ENCODE measurements at regions of chr3 and their contacts with region 1.

Region 1: GRCh38 chr3:37967260-37967881 is 23.2 kb upstream of the VILL start:
- DNase-seq: peak; percentile 76
- ATAC-seq: peak; percentile 87

Region 2: GRCh38 chr3:37856381-37856780 is 111.0 kb before region 1 on chr3:
- intact Hi-C with region 1: loop called (anchors 2 kb)
- DNase-seq: no peak
- ATAC-seq: peak; percentile 42

Region 3: DNA sequence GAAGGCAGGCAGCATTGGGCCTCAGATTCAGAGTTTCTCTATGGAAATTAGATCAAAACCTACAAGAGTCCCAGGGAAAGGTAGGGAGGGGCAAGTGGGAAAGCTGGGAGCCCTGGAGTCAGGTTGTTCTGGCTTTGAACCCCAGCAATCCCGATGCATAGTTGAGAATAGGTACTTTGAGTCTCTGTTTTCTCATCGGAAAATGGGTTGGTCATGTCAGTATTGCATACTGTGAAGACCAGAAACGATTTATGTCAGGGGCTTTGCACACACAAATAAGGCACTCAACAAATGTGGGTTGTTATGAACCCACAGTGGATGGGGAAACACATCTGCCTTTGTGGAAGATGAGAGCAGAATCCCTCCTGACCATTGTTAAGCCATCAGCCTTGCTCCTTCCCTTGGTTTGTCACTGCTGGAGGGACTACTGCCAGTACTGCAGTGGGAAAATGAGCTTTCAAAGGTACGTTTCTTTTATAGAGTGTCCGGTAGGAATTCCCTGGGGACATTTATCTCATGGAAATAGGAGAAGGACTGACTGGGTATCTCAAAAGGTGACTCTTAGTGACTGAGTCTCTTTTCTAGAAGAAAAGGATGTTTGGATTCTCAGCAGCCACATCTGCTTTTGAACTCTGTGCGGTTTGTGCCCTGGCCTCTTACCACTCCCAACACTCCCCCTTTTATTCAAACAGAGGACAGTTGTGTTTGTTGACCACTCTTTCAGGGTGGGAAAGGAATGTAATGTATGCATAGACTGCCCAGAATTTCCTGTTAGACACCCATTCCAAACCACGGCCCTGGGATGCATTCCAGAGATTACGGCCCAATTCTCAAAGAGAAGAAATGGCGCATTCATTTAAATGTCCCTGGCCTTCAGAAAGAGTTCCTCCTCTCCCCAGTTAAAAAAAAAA is 31.4 kb before region 1 on chr3:
- intact Hi-C with region 1: no loop called
- DNase-seq: no peak
- ATAC-seq: peak; percentile 24

Region 4: DNA sequence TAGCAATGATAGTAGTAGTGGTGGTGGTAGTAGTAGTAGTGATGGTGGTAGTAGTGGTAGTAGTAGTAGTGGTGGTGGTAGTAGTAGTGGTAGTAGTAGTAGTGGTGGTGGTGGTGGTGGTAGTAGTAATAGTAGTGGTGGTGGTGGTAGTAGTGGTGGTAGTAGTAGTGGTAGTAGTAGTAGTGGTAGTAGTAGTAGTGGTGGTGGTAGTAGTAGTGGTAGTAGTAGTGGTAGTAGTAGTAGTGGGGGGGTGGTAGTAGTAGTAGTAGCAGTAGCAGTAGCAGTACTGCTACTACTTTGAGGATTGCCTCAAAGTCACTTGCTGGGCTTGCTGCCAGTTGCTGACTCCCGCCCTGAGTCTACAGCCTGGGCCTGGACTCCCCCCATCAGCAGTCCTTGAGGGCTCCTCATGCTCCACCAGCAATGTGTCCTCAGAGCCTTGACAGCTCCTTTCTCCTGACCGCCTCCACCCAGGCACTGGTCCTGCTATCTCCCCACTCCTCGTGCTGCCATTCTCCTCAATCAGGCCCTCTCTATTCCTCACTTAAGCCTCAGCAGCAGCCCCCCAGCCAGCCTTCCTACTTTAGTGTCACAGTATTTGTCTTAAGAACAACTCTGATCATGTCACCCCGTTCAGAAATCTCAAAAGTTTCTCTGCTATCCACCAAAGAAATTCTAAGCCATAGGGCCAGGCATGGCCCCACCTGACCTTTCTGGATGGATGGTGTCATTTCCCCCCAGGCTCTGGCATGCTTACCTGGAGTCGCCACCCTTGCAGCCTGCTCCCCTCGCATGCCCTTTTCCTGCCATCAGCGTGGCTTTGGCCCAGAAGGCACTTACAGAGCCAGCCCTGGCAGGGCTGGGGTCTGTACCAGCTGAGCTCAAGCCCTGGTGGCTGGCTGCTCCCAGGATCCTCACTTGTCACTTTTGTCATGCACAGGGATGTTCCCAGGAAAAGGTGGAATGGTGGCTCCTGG is 117.3 kb after region 1 on chr3:
- intact Hi-C with region 1: no loop called
- DNase-seq: peak; percentile 41
- ATAC-seq: peak; percentile 54

Measured in Right ventricle myocardium superior (tissue), 1 donor.